ENCODE measurements at regions of chr16 and their contacts with region 1.

Region 1: GRCh38 chr16:81723098-81723723 is 55.9 kb upstream of the PLCG2 start:
- DNase-seq: peak in 1 of 2 donors; percentile 71
- H3K4me3 ChIP-seq: no peak overlapping the region
- CTCF ChIP-seq: peak in 1 of 3 donors; percentile 71
- POLR2A ChIP-seq: no peak

Region 2: GRCh38 chr16:81403616-81404373 is 319.4 kb before region 1 on chr16:
- intact Hi-C with region 1: loop called (anchors 5 kb)
- DNase-seq: peak; percentile 84 to 97
- H3K4me3 ChIP-seq: no peak overlapping the region
- CTCF ChIP-seq: peak in 1 of 3 donors; percentile 90
- POLR2A ChIP-seq: no peak

Measured in lower leg skin (tissue), 4 donors.